RWPE1 (cell line): ENCODE measurements at regions of chr9 and their contacts with region 1.

Region 1: DNA sequence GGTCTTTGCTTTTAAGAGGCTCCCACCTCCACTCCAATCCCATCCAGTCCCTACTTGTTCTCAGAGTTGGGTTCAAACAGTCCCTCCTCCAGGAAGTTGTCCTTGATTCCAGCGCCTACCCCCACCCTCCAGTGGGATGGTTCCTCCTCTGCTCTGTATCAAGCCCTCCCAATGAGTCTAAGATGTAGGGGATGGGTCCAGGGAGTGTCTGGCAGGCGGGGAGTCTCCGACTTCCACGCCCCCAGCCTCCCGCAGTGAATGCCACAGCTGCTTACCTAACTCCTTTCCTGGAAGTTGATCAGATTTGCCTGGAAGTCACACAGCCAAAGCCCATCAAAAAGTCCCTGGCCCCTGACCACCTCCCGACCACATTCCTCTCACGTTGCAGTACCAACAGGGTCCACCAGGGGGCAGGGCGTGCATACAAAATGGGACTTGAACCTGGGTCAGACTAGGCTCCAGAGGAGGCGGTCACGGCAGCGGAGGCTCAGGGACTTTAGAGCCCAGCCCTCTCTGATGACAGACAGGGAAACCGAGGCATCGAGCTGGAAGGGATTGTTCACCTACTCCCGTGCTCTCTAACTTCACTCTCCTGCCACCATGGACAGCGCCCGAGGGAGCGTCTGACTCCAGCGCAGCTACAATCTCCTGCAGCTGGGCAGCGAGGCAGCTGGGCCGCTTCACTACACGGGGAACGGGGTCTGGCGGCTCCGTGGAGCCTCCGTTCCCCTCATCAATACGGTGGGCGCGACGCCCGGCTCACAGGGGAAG is 25.0 kb upstream of the TDRD7 start:
- DNase-seq: peak; percentile 85
- H3K27ac ChIP-seq: no peak overlapping the region
- CTCF ChIP-seq: peak; percentile 99

Region 2: DNA sequence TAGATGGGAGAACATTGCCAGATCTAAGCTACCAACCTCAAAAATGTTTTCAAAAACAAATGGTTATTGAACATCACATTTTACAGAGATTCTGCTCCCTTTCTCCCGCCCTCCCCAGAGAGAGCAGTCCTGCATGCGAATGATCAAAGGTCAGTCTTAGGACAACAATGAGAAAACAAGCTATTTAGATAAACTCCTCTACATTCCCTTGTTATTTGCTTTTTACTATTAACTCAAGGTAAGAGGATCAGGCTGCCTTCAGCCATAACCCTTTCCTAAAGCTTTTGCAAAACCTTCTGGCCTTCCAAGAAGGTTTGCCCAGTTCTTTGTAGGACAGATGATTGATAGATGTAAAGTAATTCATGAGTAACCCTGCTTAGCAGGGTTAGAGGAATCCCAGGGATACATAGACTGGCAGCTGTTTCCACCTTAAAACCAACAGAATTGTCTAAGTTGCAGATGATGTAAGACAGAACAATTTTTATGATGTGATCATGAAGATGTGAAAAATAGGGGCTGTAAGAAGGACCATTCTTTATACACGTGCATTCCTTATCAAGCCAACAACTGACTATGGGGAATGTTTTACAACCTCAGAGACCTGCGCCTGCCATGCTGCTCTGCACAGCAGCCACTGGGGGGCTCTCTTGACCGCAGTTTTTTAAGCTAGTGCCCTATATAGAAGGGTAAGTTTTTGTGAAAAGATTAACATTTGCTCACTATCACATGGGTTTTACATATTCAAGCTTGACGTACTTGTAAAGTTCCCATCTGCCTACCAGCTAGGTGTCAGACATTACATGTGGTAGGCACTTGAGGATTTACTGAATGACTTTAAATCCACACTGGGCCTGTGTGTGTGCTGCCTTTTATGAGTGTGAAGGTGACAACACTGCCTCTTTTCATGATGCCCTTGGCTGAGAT is 530.3 kb before region 1 on chr9:
- CTCF ChIA-PET with region 1: interaction called, 17 read pairs
- POLR2A ChIA-PET with region 1: no interaction called
- DNase-seq: peak; percentile 64
- H3K27ac ChIP-seq: no peak overlapping the region
- CTCF ChIP-seq: peak; percentile 99

Region 3: DNA sequence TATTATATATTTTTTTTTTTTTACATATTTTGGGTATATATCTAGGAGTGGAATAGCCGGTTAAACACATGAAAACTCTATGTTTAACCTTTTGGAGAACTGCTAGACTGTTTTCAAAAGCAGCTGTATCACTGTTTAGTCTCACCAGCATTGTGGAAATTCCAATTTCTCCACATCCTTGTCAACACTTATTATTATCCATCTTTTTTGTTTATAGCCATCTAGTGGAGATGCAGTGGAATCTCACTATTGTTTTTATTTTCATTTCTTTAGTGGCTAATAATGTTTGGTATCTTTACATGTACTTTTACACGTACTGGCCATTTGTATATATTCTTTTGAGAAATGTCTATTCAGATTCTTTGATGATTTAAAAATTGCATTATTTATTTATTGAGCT is 102.1 kb before region 1 on chr9:
- CTCF ChIA-PET with region 1: no interaction called
- POLR2A ChIA-PET with region 1: no interaction called
- DNase-seq: no peak
- H3K27ac ChIP-seq: no peak overlapping the region
- CTCF ChIP-seq: peak; percentile 15; the same call in 1 of the 2 replicates

Region 4: DNA sequence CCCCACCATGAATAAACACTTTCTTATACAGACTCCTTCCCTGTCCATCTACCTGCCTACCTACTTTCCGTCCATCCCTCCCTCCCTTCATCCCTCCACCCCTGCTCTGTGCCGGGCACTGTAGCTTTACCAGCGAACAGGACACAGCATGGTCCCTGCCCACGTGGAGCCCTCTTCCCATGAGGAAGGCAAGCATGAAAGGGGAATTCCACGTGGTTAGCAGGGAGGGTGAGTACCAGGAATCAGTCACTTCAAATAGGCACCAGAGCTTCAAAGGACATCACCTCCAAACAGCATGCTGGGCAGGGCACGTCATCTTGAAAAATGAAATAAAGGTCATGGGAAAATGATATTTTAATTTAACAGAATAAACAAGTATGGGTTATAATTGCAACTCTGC is 10.0 kb before region 1 on chr9:
- CTCF ChIA-PET with region 1: interaction called, 27 read pairs
- POLR2A ChIA-PET with region 1: no interaction called
- DNase-seq: no peak
- H3K27ac ChIP-seq: no peak overlapping the region
- CTCF ChIP-seq: no peak

Region 5: DNA sequence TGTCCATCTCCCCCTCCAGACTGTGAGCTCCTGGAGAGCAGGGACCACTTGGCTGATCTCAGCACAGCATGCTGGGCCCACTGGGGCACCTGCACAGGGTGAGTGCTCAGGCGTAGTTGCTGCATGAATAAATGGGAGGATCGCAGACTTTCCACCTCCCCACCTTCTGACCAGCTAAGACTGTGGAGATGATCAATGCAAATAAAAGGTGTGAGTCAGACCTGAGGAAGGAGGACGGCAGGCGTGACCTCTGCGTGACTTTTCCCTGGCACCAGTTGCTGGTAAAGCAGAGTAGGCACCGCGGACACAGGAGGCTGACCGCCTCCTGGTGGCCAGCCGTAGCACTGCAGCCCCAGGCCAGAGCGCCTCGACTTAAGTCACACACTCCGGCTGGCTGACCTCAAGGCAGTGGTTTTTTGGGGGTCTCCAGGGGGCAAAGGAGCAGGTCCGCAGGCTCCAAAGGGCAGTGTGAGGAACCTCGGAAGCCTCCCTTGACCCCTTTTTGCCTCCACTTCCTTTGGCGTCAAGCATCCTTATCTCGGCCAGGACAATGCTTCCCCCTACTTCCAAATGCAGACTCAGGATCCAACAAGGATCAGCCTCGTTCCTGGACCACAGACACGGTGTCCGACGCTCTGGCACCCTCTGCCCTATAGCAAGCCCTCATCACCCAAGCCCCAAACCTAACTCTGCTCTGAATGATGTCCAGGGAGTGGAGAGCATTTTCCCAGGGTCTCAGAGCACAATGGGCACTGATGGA is 12.3 kb after region 1 on chr9:
- CTCF ChIA-PET with region 1: interaction called, 31 read pairs
- POLR2A ChIA-PET with region 1: no interaction called
- DNase-seq: peak; percentile 100
- H3K27ac ChIP-seq: no peak overlapping the region
- CTCF ChIP-seq: peak; percentile 98